Naive thymus-derived CD4-positive, alpha-beta T cell (primary cell): ENCODE measurements at regions of chr4 and their contacts with region 1.

Region 1: GRCh38 chr4:98658287-98659105 is at the start of gene TSPAN5:
- DNase-seq: peak; percentile 60 to 90 (median 75)
- ATAC-seq: peak; percentile 87
- H3K4me3 ChIP-seq: peak within 1 kb of the TSS; percentile 61
- H3K4me3 Mint-ChIP-seq: peak within 1 kb of the TSS; percentile 85 to 99 (median 92)
- H3K27ac ChIP-seq: peak within 1 kb of the TSS; percentile 65
- H3K27ac Mint-ChIP-seq: peak within 1 kb of the TSS; percentile 20 to 95 (median 84)
- H3K4me1 ChIP-seq: peaks cover 32 to 40% of the 10 kb centered on the region in 2 donors
- H3K4me1 Mint-ChIP-seq: peaks cover 56 to 87% (median 83%) of the 10 kb centered on the region in 7 donors
- H3K27me3 ChIP-seq: no peaks in the 10 kb centered on the region
- H3K27me3 Mint-ChIP-seq: no peaks in the 10 kb centered on the region
- total RNA-seq, gene TSPAN5: 3.3 to 31.6 (median 10.9) TPM

Region 2: DNA sequence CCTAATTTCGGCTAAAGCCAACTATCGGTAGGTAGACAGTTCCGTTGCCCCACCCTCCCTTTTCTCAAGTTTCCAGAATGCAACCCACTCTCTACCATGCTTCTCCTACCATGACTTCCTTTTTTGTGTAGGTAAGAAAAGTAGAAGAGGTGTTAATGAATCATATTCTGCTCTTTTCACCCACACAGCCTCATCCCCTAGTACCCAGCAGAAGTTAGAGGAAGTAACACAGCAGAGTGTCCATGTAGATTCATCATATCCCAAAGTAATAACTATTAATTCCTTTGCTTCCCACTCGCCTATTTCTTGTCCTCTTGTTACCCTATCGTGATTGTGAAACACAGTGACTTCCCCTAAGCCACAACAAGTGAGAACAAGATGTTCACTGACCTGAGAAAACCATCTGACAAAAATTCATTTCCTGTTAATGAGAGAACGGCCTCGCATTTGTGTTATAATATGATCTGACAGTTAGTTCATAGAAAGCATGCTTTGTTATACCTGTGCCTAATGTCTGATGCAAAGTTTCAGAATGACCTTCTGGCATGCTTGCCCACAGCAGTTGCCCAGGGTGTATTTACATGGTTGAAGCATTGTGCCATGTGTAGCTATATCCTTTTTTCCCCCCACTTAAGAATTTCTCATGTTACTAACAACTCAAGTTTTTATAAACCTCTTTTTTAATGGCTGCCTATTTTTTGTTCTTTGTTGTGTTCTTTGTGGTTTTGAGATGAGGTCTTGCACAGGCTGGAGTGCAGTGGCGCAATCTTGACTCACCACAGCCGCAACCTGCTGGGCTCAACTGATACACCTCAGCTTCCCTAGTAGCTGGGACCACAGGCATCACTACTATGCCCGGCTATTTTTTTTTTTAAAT is 211.8 kb before region 1 on chr4:
- CTCF ChIA-PET with region 1: no interaction called
- POLR2A ChIA-PET with region 1: no interaction called
- intact Hi-C with region 1: loop called in 1 of 2 experiments (anchors 1 kb)
- DNase-seq: peak in 7 of 9 donors; percentile 23 to 53 (median 42)
- ATAC-seq: peak; percentile 89
- H3K4me3 ChIP-seq: peak overlapping the region; percentile 9
- H3K4me3 Mint-ChIP-seq: peak overlapping the region; percentile 49 to 75 (median 71)
- H3K27ac ChIP-seq: no peak overlapping the region
- H3K27ac Mint-ChIP-seq: peak overlapping the region; percentile 52 to 88 (median 76)
- H3K4me1 ChIP-seq: peaks cover 30 to 39% of the 10 kb centered on the region in 2 donors
- H3K4me1 Mint-ChIP-seq: peaks cover 33 to 44% (median 37%) of the 10 kb centered on the region in 7 donors
- H3K27me3 ChIP-seq: no peaks in the 10 kb centered on the region
- H3K27me3 Mint-ChIP-seq: no peaks in the 10 kb centered on the region

Region 3: GRCh38 chr4:98601708-98602107 is 56.8 kb before region 1 on chr4:
- CTCF ChIA-PET with region 1: no interaction called
- POLR2A ChIA-PET with region 1: no interaction called
- intact Hi-C with region 1: loop called (anchors 2 to 5 kb)
- DNase-seq: no peak
- ATAC-seq: no peak
- H3K4me3 ChIP-seq: no peak overlapping the region
- H3K4me3 Mint-ChIP-seq: peak overlapping the region in 7 of 10 donors; percentile 1 to 70 (median 29)
- H3K27ac ChIP-seq: no peak overlapping the region
- H3K27ac Mint-ChIP-seq: peak overlapping the region in 6 of 9 donors; percentile 0 to 50 (median 18)
- H3K4me1 ChIP-seq: peaks cover 0 to 27% of the 10 kb centered on the region in 2 donors
- H3K4me1 Mint-ChIP-seq: peaks cover 18 to 47% (median 44%) of the 10 kb centered on the region in 7 donors
- H3K27me3 ChIP-seq: no peaks in the 10 kb centered on the region
- H3K27me3 Mint-ChIP-seq: no peaks in the 10 kb centered on the region

Region 4: DNA sequence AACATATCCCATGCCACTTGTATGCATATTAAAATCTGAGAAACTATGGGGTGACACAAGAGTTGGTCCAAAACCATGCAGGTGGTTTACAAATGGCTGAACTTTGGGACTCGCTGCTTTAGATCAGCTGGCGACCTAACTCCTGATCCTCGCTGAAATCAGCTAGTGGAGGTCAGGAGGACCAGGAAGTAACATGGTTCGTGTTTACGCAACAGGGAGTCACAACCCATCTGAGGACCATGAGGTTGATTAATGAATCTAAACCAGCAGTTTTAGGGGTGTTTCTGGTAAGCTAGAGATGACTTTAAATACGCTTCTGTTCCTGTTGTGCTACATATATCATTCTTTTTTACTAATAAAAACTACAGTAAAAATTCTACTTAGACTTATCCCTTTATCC is 13.0 kb before region 1 on chr4:
- CTCF ChIA-PET with region 1: interaction called, 4 read pairs
- POLR2A ChIA-PET with region 1: interaction called, 5 read pairs
- intact Hi-C with region 1: loop called in 1 of 2 experiments (anchors 1 kb)
- DNase-seq: no peak
- ATAC-seq: no peak
- H3K4me3 ChIP-seq: no peak overlapping the region
- H3K4me3 Mint-ChIP-seq: no peak overlapping the region
- H3K27ac ChIP-seq: no peak overlapping the region
- H3K27ac Mint-ChIP-seq: peak overlapping the region in 2 of 9 donors; percentile 51 to 54
- H3K4me1 ChIP-seq: peaks cover 4 to 13% of the 10 kb centered on the region in 2 donors
- H3K4me1 Mint-ChIP-seq: peaks cover 21 to 56% (median 33%) of the 10 kb centered on the region in 7 donors
- H3K27me3 ChIP-seq: no peaks in the 10 kb centered on the region
- H3K27me3 Mint-ChIP-seq: no peaks in the 10 kb centered on the region

Region 5: DNA sequence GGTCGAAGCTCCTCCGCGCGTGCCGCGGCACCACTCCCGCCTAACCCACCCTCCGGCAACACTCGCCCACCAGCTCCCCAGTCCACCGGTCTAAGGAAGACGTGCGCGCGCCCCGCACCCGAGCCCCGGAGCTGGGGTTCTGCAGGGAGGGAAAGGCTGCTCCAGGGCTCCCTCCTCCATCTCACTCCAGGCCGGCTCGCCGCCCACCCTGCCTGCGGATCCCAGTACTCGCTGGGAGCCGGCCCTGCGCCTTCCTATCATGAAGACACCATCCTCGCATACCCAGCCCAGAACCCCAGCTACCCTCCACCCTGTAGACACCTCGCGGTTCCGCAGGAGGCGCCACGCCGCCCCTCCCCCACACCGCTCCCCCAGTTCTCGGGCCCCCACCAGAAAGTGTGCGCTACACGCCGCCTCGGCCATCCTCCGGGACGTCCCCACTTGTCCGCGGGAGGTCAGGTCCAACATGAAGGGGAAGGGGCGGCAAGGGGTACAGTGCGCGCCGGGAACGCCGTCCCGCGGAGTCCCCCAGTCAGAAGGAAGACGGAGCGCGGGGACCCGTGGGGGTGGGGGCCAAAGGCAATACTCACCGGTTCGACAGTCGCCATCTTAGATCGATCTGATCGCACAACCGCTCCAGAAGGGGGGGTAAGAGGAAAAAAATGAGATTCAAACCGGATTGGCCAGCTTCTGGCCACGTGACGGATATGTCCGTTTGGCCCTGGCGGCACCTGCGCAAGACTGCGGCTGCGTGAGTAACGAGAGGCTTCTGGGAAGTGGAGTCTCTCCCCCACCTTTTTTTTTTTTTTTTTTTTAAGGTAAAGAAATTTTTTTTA is 270.2 kb after region 1 on chr4 and contains the start of gene EIF4E:
- CTCF ChIA-PET with region 1: no interaction called
- POLR2A ChIA-PET with region 1: interaction called, 3 read pairs
- intact Hi-C with region 1: loop called (anchors 1 kb)
- DNase-seq: peak; percentile 81 to 99 (median 97)
- ATAC-seq: peak; percentile 88
- H3K4me3 ChIP-seq: peak within 1 kb of the TSS; percentile 96
- H3K4me3 Mint-ChIP-seq: peak within 1 kb of the TSS; percentile 91 to 100 (median 96)
- H3K27ac ChIP-seq: peak within 1 kb of the TSS; percentile 88
- H3K27ac Mint-ChIP-seq: peak within 1 kb of the TSS; percentile 88 to 98 (median 97)
- H3K4me1 ChIP-seq: peaks cover 9 to 15% of the 10 kb centered on the region in 2 donors
- H3K4me1 Mint-ChIP-seq: peaks cover 12 to 52% (median 38%) of the 10 kb centered on the region in 7 donors
- H3K27me3 ChIP-seq: no peaks in the 10 kb centered on the region
- H3K27me3 Mint-ChIP-seq: peaks cover 0 to 4% (median 0%) of the 10 kb centered on the region in 5 donors
- total RNA-seq, gene EIF4E: 53.6 to 96.1 (median 63.0) TPM

Region 6: GRCh38 chr4:99504804-99505569 is 846.5 kb after region 1 on chr4:
- CTCF ChIA-PET with region 1: no interaction called
- POLR2A ChIA-PET with region 1: no interaction called
- intact Hi-C with region 1: loop called in 1 of 2 experiments (anchors 10 kb)
- DNase-seq: no peak
- ATAC-seq: no peak
- H3K4me3 ChIP-seq: no peak overlapping the region
- H3K4me3 Mint-ChIP-seq: peak overlapping the region in 3 of 10 donors; percentile 14 to 76 (median 56)
- H3K27ac ChIP-seq: no peak overlapping the region
- H3K27ac Mint-ChIP-seq: peak overlapping the region in 8 of 9 donors; percentile 14 to 91 (median 40)
- H3K4me1 ChIP-seq: peaks cover 8 to 33% of the 10 kb centered on the region in 2 donors
- H3K4me1 Mint-ChIP-seq: peaks cover 31 to 63% (median 57%) of the 10 kb centered on the region in 7 donors
- H3K27me3 ChIP-seq: no peaks in the 10 kb centered on the region
- H3K27me3 Mint-ChIP-seq: peaks cover 0 to 2% (median 0%) of the 10 kb centered on the region in 5 donors